ENCODE measurements at regions of chr5 and their contacts with region 1.

Region 1: GRCh38 chr5:54087436-54087835 is 222.9 kb downstream of the ARL15 start:
- DNase-seq: no peak
- H3K4me3 ChIP-seq: no peak overlapping the region
- H3K27ac ChIP-seq: no peak overlapping the region
- H3K4me1 ChIP-seq: no peaks in the 10 kb centered on the region
- H3K27me3 ChIP-seq: no peaks in the 10 kb centered on the region
- CTCF ChIP-seq: no peak
- POLR2A ChIP-seq: no peak

Region 2: GRCh38 chr5:53714322-53714941 is 373.0 kb before region 1 on chr5:
- intact Hi-C with region 1: loop called (anchors 5 kb)
- DNase-seq: no peak
- H3K4me3 ChIP-seq: no peak overlapping the region
- H3K27ac ChIP-seq: no peak overlapping the region
- H3K4me1 ChIP-seq: no peaks in the 10 kb centered on the region
- H3K27me3 ChIP-seq: no peaks in the 10 kb centered on the region
- CTCF ChIP-seq: no peak
- POLR2A ChIP-seq: no peak

Region 3: DNA sequence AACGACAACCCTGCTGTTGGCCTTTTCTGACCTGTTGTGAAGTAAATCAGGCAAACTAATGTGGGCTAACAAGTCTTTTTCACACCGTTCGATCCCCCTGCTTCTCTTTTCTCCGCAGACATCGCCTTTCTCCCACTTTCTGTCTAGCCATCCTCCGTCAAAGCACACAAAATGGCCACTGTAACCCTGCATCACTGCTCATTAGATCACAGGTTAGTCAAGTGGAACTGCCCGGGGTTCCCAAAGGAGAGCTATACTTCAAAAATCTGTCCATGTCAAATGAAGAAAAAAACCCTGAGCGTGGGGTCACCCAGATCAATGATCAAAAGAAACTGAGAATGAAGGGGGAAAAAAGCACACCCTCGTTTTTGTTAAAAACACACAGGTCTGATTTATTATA is 10.8 kb after region 1 on chr5:
- intact Hi-C with region 1: no loop called
- DNase-seq: no peak
- H3K4me3 ChIP-seq: no peak overlapping the region
- H3K27ac ChIP-seq: no peak overlapping the region
- H3K4me1 ChIP-seq: no peaks in the 10 kb centered on the region
- H3K27me3 ChIP-seq: no peaks in the 10 kb centered on the region
- CTCF ChIP-seq: no peak
- POLR2A ChIP-seq: no peak

Measured in breast epithelium (tissue), 4 donors.